ENCODE measurements at regions of chr6 and their contacts with region 1.

Region 1: DNA sequence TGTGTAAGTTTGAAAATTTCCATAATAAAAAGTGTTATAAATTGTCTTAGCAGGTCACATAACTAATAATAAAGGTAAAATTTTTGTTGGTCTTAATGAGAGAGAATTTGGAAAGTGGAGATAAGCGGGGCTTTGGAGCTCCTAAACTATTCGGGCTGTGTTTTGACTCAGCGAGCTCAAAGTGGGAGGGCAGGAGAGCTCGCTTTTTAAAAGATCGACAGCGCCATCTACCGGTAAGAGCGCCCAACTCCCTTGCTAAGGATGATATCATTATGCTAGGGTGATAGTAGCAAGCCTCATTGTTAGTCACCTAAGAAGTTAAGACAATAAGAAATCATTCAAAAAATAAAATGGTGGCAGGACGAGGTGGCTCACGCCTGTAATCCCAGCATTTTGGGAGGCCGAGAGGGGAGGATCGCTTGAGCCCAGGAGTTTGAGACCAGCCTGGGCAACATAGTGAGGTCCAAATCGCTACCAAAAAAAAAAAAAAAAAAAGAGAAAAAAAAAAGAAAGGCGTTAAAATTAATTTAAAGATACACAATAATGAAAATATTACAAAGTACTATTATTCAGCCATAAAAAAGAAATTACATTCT is 24.8 kb downstream of the C6orf15 start:
- DNase-seq: peak; percentile 87 to 91 (median 90)
- H3K4me3 ChIP-seq: peak overlapping the region in 1 of 7 experiments; percentile 26
- H3K27ac ChIP-seq: peak overlapping the region in 1 of 2 experiments; percentile 28
- H3K4me1 ChIP-seq: peaks cover 0 to 21% (median 14%) of the 10 kb centered on the region in 4 experiments
- H3K27me3 ChIP-seq: no peaks in the 10 kb centered on the region

Region 2: GRCh38 chr6:30828027-30828960 is 259.3 kb before region 1 on chr6:
- CTCF ChIA-PET with region 1: interaction called, 33 read pairs
- POLR2A ChIA-PET with region 1: no interaction called
- DNase-seq: peak; percentile 80 to 90 (median 88)
- H3K4me3 ChIP-seq: peak overlapping the region in 1 of 7 experiments; percentile 33
- H3K27ac ChIP-seq: peak overlapping the region in 1 of 2 experiments; percentile 15
- H3K4me1 ChIP-seq: peaks cover 9 to 41% (median 35%) of the 10 kb centered on the region in 4 experiments
- H3K27me3 ChIP-seq: peaks cover 0 to 3% (median 0%) of the 10 kb centered on the region in 5 experiments

Region 3: GRCh38 chr6:30914076-30914853 is 173.3 kb before region 1 on chr6 and contains the start of gene VARS2:
- CTCF ChIA-PET with region 1: interaction called, 67 read pairs
- POLR2A ChIA-PET with region 1: interaction called, 3 read pairs
- DNase-seq: peak; percentile 85 to 88 (median 86)
- H3K4me3 ChIP-seq: peak within 1 kb of the TSS; percentile 15 to 88 (median 76)
- H3K27ac ChIP-seq: peak within 1 kb of the TSS in 1 of 2 experiments; percentile 67
- H3K4me1 ChIP-seq: peaks cover 0 to 23% (median 22%) of the 10 kb centered on the region in 4 experiments
- H3K27me3 ChIP-seq: no peaks in the 10 kb centered on the region

Region 4: GRCh38 chr6:31103136-31103535 is 15.5 kb after region 1 on chr6:
- CTCF ChIA-PET with region 1: interaction called, 11 read pairs
- POLR2A ChIA-PET with region 1: no interaction called
- DNase-seq: no peak
- H3K4me3 ChIP-seq: no peak overlapping the region
- H3K27ac ChIP-seq: no peak overlapping the region
- H3K4me1 ChIP-seq: peaks cover 0 to 3% (median 1%) of the 10 kb centered on the region in 4 experiments
- H3K27me3 ChIP-seq: no peaks in the 10 kb centered on the region

Measured in common myeloid progenitor, CD34-positive (primary cell).